ENCODE measurements at regions of chr3 and their contacts with region 1.

Region 1: DNA sequence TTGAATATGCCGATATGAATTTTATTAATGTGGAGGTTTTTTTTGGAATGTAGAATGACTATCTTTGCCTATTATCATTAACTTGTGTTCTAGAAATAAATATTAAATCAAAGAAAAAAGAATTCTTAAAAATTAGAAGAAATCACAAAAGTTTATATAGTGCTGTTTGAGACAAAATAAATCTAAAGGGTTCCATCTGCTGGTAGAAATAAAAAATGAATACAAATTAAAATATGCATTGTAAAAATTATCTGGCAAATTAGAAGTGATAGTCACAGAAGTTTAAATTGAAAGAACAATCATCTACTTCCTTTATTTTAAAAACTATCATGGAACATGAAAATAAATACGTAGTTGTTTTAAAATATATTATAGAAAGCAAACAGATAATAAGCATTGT is 22.7 kb upstream of the ZBTB20 start:
- DNase-seq: peak; percentile 20
- ATAC-seq: no peak
- H3K4me3 ChIP-seq: no peak overlapping the region
- H3K27ac ChIP-seq: no peak overlapping the region
- H3K4me1 ChIP-seq: no peaks in the 10 kb centered on the region
- H3K27me3 ChIP-seq: peaks cover 3% of the 10 kb centered on the region; the same call in 1 of the 2 replicates
- CTCF ChIP-seq: peak; percentile 53

Region 2: DNA sequence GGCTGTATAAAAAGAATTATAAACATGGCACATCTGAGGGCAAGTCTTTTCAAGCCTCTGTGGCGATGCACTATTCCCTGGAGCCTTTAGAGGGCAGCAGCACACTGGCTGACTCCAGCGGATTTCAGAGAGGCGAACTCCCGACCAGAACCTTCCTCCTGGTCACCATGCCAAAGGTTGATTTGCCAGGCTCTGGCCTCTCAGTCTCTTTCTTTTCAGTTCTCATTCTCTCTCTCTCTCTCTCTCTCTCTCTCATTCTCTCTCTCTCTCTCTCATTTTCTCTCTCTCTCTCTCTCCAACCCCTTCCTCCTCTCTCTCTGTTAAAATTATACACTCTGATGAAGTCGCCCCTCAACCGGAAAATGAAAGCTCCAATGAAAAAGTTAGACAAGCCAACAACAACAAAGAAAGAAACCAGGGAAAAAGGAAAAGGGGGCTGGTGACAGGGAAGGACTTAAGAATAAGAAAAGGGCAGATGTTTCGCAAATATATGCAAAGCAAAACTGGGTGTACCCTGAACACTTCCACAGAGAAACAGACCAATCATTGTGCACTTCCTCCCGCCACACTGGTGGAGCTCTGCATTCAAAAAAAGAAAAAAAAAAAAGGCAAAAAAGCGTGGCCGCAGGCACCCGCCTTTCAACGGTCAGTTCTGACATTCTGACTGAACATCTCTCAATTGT is 785.8 kb before region 1 on chr3:
- CTCF ChIA-PET with region 1: no interaction called
- POLR2A ChIA-PET with region 1: no interaction called
- intact Hi-C with region 1: loop called (anchors 5 kb)
- DNase-seq: peak; percentile 77
- ATAC-seq: peak; percentile 91
- H3K4me3 ChIP-seq: no peak overlapping the region
- H3K27ac ChIP-seq: no peak overlapping the region
- H3K4me1 ChIP-seq: no peaks in the 10 kb centered on the region
- H3K27me3 ChIP-seq: no peaks in the 10 kb centered on the region
- CTCF ChIP-seq: peak; percentile 92

Region 3: GRCh38 chr3:114827495-114827894 is 342.3 kb before region 1 on chr3:
- CTCF ChIA-PET with region 1: no interaction called
- POLR2A ChIA-PET with region 1: no interaction called
- intact Hi-C with region 1: loop called (anchors 1 kb)
- DNase-seq: peak; percentile 51
- ATAC-seq: peak; percentile 86
- H3K4me3 ChIP-seq: no peak overlapping the region
- H3K27ac ChIP-seq: no peak overlapping the region
- H3K4me1 ChIP-seq: no peaks in the 10 kb centered on the region
- H3K27me3 ChIP-seq: no peaks in the 10 kb centered on the region
- CTCF ChIP-seq: peak; percentile 68

Region 4: GRCh38 chr3:115040673-115041286 is 129.0 kb before region 1 on chr3:
- CTCF ChIA-PET with region 1: no interaction called
- POLR2A ChIA-PET with region 1: no interaction called
- intact Hi-C with region 1: loop called (anchors 2 kb)
- DNase-seq: peak; percentile 63
- ATAC-seq: peak; percentile 78
- H3K4me3 ChIP-seq: no peak overlapping the region
- H3K27ac ChIP-seq: no peak overlapping the region
- H3K4me1 ChIP-seq: no peaks in the 10 kb centered on the region
- H3K27me3 ChIP-seq: no peaks in the 10 kb centered on the region
- CTCF ChIP-seq: peak; percentile 86

Region 5: DNA sequence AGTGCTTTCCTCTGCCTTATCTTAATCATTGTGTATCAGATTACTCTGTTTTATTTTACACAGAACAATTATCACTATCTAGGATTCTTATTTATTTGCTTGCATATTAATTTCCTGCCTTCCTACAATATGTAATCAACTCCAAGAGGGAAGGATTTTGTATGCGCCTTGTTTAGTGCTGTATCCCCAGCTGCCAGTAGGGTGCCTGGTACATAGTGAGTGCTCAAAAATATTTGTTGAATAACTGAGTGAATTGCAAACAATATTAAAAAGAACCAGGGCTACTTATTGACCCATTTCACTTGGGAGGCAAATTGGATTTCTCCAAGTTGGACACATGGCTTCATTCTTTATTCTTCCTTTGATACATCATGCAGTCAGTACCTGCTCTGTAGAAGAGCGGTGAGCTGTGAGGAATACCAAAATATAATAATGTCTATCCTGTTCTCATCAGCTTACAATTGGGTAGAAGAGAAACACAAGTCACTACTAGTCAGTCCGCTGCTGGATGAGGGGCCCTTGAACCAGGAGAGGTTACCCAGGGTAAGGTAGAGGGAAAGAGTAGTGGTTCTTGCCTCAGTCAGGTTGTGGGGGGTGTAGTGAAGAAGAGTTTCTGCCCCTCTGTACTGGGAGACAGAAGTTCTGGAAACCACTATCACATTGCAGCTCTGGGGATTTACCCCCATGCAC is 211.2 kb after region 1 on chr3:
- CTCF ChIA-PET with region 1: no interaction called
- POLR2A ChIA-PET with region 1: no interaction called
- intact Hi-C with region 1: no loop called
- DNase-seq: no peak
- ATAC-seq: no peak
- H3K4me3 ChIP-seq: no peak overlapping the region
- H3K27ac ChIP-seq: no peak overlapping the region
- H3K4me1 ChIP-seq: no peaks in the 10 kb centered on the region
- H3K27me3 ChIP-seq: 0 out of 2 replicates have a peak, but pooled peaks cover 4% of the 10 kb centered on the region
- CTCF ChIP-seq: peak; percentile 42